ENCODE measurements at regions of chr1 and their contacts with region 1.

Region 1: GRCh38 chr1:187570166-187570565 is 741.4 kb downstream of the PLA2G4A start:
- DNase-seq: no peak
- ATAC-seq: no peak
- H3K4me3 Mint-ChIP-seq: no peak overlapping the region
- H3K27ac Mint-ChIP-seq: no peak overlapping the region
- H3K4me1 Mint-ChIP-seq: no peaks in the 10 kb centered on the region
- H3K27me3 Mint-ChIP-seq: no peaks in the 10 kb centered on the region
- CTCF ChIP-seq: no peak

Region 2: DNA sequence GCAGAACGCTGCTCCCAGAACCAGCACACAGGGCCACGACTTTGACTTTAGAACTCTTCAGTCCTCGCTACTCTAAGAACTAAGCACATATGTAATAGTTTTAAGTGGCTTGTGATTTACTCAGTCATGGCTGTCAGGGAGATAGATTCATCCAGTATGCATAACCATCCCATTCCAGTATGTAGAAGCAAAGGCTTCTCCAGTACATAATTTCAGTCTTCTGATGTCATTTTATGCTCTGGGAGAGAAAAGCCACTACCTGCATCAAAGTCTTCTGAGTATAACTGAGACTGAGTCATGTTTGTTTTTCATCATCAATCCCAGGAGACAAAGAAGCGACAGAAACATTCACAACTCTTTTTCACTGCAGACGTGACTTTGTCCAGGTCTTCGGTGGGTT is 144.3 kb after region 1 on chr1:
- CTCF ChIA-PET with region 1: no interaction called
- POLR2A ChIA-PET with region 1: no interaction called
- intact Hi-C with region 1: loop called (anchors 5 kb)
- DNase-seq: no peak
- ATAC-seq: no peak
- H3K4me3 Mint-ChIP-seq: no peak overlapping the region
- H3K27ac Mint-ChIP-seq: no peak overlapping the region
- H3K4me1 Mint-ChIP-seq: no peaks in the 10 kb centered on the region
- H3K27me3 Mint-ChIP-seq: no peaks in the 10 kb centered on the region
- CTCF ChIP-seq: no peak

Measured in activated B cell treated with CpG ODN at 0.5 μM for 24 hours (primary cell).